Kidney (tissue), 22 donors: ENCODE measurements at regions of chr1 and their contacts with region 1.

Region 1: DNA sequence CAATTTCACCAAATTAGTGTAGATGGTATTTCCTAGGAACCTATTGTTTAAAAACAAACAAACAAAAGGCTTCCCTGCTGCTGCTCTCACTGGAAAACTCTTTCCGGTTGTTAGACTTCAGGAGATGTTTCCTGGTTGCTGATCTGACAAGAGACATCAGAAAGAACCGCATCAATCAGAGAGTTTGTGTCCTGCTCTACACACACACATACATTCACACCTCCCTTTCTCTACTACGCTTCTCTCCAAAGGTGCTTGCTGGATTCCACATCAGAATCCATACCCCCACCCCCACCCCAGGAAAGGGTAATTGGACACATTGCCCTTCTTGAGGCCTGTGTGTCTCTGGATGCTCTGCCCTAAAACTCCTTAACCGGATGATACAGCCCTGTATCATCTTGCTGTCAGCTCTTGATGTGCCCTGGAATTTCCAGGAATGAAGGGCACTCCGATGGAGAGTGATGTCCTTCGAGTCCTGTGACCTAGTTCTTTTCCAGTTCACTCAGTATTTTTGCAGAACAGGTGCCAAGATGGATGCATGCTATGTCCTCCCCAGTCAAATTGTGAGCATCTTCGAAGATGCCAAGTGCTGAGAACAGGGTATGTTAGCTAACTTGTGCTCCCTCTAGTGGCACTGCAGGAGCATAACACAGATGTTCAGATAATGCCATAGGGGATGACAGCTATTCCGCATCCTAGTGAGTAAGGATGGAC is 113.7 kb upstream of the SLC35F3 start:
- DNase-seq: peak in 4 of 5 donors; percentile 40 to 79 (median 53)
- H3K4me3 ChIP-seq: no peak overlapping the region
- H3K27ac ChIP-seq: no peak overlapping the region
- H3K4me1 ChIP-seq: no peaks in the 10 kb centered on the region
- H3K27me3 ChIP-seq: no peaks in the 10 kb centered on the region
- CTCF ChIP-seq: peak; percentile 94

Region 2: DNA sequence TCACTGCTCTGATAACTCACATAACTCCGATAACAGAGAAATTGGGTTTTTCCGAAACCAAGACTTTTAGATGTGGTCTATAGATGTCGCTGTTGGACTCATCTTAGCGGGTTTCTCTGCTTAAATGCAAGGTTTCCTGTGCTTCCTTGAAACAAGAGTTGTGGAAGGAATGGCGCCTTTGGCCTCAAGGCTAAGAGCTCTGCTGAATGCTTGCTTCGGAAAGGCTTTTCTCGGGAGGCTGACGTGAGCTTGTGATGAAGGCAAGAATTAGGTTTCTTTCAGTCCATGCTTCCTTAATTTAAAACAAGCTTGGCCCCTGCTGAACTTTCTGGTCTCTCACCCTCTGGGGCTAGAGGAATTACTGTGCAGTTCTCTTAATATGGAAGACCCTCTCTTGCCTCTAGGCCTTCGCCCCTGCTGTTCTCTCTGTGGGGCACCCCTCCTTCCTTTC is 349.8 kb before region 1 on chr1:
- intact Hi-C with region 1: loop called (anchors 10 kb)
- DNase-seq: peak in 4 of 5 donors; percentile 50 to 90 (median 72)
- H3K4me3 ChIP-seq: no peak overlapping the region
- H3K27ac ChIP-seq: no peak overlapping the region
- H3K4me1 ChIP-seq: no peaks in the 10 kb centered on the region
- H3K27me3 ChIP-seq: no peaks in the 10 kb centered on the region
- CTCF ChIP-seq: peak; percentile 53

Region 3: DNA sequence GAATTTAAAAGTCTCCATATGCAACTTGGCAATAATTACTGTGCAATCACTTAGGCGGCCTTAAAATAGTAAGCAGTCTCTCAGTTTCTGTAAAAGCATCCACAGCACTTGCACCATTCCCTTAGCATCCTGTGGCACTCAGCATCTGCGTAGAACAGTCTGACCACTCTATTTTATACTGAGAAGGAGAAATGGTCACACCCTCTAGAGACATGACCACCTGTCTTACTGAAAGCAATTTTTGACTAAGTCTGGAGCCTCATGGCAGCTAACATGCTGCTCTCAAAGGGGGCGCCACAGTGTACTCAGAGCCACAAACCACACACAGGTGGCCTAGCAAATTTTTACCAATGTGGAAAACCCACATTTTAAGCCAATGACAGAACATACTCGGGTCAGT is 114.9 kb before region 1 on chr1:
- intact Hi-C with region 1: no loop called
- DNase-seq: no peak
- H3K4me3 ChIP-seq: no peak overlapping the region
- H3K27ac ChIP-seq: no peak overlapping the region
- H3K4me1 ChIP-seq: peaks cover 0 to 13% (median 9%) of the 10 kb centered on the region in 3 donors
- H3K27me3 ChIP-seq: no peaks in the 10 kb centered on the region
- CTCF ChIP-seq: no peak